ENCODE measurements at regions of chr2 and their contacts with region 1.

Region 1: DNA sequence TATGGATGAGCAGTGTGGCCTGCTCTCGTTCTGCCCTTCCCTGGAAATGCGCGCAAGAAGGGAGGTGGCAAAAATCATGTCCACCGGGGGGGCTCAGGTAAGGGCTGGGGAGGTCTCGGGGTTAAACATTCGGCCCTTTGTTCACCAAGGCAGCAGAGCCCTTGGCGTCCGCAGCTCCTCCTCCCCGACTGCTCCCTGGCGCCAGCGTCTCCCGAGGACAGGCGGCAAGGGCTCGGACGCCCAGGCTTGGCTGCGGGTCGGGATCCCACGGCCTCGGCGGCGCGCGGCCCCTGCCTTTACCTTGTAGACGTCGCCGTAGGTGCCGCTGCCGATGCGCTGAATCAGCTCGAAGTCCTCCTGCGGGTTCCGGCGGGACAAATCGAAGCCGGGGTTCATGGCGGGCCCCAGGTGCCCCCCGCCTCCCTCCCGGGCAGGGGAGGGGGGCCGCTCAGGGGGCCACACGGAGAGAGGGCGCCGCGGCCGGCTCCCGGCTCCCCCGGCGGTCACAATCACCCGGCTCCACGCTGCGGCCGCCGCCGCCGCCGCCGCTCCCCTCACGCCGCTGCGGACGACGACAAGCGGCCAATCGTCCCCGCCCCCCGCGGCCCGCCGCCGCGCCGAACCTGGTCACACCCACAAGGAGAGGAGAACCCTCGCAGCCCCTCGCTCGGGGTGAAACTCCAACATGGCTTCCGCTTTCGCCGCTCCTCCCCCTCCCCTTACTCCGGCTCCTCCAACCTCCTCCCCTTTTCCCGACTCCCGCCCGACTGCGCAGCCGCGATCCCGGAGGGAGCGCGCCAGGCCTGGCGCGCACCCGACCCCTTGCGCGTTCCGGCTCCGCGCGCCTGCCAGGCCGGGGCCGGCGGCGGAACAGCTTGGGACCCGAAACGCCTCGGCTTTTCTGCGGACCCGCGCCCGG is at the start of gene MAP4K3:
- DNase-seq: peak; percentile 43 to 87 (median 64)
- ATAC-seq: peak; percentile 47
- H3K4me3 ChIP-seq: peak within 1 kb of the TSS; percentile 68
- H3K4me3 Mint-ChIP-seq: peak within 1 kb of the TSS; percentile 97
- H3K27ac ChIP-seq: no peak within 1 kb of the TSS
- H3K27ac Mint-ChIP-seq: peak within 1 kb of the TSS; percentile 79
- H3K4me1 ChIP-seq: peaks cover 18% of the 10 kb centered on the region
- H3K4me1 Mint-ChIP-seq: peaks cover 57% of the 10 kb centered on the region
- H3K27me3 ChIP-seq: no peaks in the 10 kb centered on the region
- H3K27me3 Mint-ChIP-seq: no peaks in the 10 kb centered on the region
- CTCF ChIP-seq: no peak
- total RNA-seq, gene MAP4K3: 18.4 to 22.5 TPM

Region 2: DNA sequence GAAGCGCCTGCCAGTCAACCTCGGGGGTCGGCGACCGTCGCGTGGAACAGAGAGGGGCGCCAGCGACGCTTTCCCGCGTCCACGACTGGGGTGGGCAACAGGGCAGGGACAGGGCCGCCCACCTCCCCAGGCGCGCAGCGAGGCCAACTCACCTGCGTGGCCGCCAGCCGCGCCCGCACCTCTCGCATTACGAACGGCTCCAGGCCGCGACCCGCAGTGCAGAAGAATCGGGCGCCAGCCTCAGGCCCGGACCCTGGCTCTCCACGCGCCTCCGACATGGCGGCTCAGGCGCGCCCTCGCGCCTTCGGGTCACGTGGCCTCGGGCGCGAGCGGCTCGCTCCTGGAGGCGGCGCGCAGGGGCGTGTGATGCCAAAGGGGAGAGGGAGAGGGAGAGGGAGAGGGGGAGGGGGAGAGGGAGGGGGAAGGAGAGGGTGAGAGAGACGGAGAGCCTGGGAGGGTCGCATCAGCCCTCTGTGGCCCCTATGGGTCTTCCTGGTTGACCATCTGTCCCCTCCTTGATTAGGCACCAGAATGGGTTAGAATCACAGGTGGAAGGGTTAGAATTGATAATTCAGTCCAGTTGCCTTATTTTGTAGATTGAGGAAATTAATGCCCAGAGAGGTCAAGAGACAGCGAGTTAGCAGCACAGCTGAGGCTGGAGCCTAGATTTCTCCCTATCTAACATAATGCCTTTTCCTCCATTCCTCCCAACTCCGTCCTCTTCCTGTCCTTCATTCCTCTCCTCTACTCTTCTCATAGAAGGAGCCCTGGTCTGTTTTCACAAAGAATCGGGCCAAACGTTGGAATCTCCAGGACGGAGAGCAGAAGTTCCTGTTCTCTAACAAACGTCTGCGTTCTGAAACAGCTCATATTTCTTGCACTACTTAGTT is 342.4 kb after region 1 on chr2 and contains the start of gene THUMPD2:
- CTCF ChIA-PET with region 1: no interaction called
- POLR2A ChIA-PET with region 1: no interaction called
- intact Hi-C with region 1: loop called in 1 of 2 experiments (anchors 10 kb)
- DNase-seq: peak; percentile 26 to 78 (median 50)
- ATAC-seq: peak; percentile 75
- H3K4me3 ChIP-seq: peak within 1 kb of the TSS; percentile 74
- H3K4me3 Mint-ChIP-seq: peak within 1 kb of the TSS; percentile 93
- H3K27ac ChIP-seq: peak within 1 kb of the TSS in 1 of 2 donors; percentile 60
- H3K27ac Mint-ChIP-seq: peak within 1 kb of the TSS; percentile 82
- H3K4me1 ChIP-seq: peaks cover 18% of the 10 kb centered on the region
- H3K4me1 Mint-ChIP-seq: peaks cover 66% of the 10 kb centered on the region
- H3K27me3 ChIP-seq: no peaks in the 10 kb centered on the region
- H3K27me3 Mint-ChIP-seq: no peaks in the 10 kb centered on the region
- CTCF ChIP-seq: no peak
- total RNA-seq, gene THUMPD2: 13.7 to 15.5 TPM